GM13976 (cell line): ENCODE measurements at regions of chr9 and their contacts with region 1.

Region 1: DNA sequence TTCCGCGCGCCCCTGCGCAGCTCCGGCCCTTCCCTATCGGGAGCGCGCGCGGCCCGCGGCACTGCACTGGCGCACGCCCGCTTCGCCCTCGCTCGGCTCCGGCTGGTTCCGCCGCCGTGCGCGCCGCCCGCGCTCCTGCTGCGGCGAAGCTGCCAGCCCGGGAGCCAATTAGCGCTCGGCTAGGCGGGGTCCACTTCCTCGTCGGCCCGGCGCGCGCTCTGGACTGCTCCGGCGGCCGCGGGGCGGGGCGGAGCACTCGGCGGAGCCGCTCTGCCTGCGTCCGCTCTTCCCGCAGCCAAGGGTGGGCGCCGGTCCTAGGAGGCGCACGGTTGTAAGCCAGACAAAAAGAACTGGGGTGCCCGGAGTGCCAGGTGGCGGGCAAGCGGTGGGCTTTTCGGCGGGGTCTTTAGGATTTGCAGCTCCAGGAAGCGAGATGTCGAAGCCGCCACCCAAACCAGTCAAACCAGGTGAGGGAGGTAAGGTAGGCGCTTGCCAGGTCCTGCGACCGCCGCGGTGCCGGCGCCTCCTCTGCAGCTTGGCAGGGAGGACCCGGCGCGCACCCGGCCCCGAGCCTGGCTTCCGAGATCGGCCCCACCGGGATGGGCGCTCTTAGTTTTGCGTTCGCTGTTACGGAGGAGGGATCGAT is at the start of gene OSTF1:
- DNase-seq: peak; percentile 93
- CTCF ChIP-seq: no peak

Region 2: GRCh38 chr9:74908665-74909064 is 179.7 kb before region 1 on chr9:
- in situ Hi-C with region 1: no loop called
- DNase-seq: no peak
- CTCF ChIP-seq: no peak

Region 3: GRCh38 chr9:74952281-74953151 is 135.9 kb before region 1 on chr9 and contains the start of gene C9orf40:
- in situ Hi-C with region 1: loop called (anchors 10 kb)
- DNase-seq: peak; percentile 90
- CTCF ChIP-seq: peak; percentile 95

Region 4: DNA sequence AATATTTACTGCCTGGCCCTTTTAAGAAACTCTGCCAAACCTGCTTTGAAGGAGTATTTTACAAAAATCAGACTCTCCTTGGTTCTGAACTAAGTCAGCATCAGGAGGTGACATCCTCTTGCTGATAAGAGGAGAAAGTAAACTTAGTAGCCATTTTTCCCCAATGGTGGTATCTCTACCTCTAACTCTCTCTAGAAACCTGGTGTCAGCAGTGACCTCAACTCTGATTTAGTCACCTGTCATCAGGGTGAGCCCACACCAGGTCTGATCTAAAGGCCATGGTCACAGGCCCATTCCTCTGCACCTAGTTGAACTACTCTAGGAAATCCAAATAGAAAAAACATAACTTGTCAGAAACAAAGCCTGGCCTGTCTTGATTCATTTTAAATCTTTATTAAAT is 64.5 kb before region 1 on chr9:
- in situ Hi-C with region 1: no loop called
- DNase-seq: no peak
- CTCF ChIP-seq: no peak

Region 5: DNA sequence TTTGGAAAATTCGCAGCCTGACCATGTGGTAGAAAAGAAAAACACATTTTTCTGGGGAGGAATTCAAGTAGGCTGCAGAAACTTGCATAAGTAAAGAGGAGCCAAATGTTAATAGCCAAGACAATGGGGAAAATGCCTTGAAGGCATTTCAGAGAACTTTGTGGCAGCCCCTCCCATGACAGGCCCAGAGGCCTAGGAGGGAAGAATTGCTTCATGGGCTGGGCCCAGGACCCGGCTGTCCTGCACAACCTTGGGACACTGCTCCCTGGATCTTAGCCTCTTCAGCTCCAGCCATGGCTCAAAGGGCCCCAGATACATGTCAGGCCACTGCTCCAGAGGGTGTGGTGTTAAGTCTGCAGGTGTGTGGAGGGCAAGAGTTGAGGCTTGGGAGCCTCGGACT is 158.6 kb after region 1 on chr9:
- in situ Hi-C with region 1: no loop called
- DNase-seq: no peak
- CTCF ChIP-seq: no peak

Region 6: DNA sequence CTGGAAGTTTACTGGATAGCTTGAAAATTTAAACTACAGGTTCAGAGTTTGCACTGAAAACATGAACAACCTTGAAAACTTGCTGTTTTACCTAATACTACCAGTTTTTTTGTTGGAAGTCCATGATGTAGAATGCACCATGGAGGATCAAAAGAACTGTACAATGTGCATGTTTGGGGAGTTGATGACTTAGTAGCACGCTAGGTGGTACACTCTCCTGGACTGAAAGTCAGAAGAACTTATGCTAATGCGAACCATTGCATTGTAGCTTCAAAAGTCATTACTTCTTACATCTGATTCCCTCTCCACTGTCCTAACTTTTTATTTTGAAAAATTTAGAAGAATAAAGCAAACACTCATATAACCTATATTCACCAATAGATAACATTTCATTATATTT is 210.9 kb after region 1 on chr9:
- in situ Hi-C with region 1: no loop called
- DNase-seq: no peak
- CTCF ChIP-seq: no peak